ENCODE measurements at regions of chr10 and their contacts with region 1.

Region 1: GRCh38 chr10:35707642-35708420 is 65.7 kb upstream of the FZD8 start:
- DNase-seq: no peak
- ATAC-seq: no peak
- H3K4me3 ChIP-seq: no peak overlapping the region
- H3K4me3 Mint-ChIP-seq: no peak overlapping the region
- H3K27ac ChIP-seq: no peak overlapping the region
- H3K27ac Mint-ChIP-seq: no peak overlapping the region
- H3K4me1 ChIP-seq: no peaks in the 10 kb centered on the region
- H3K4me1 Mint-ChIP-seq: no peaks in the 10 kb centered on the region
- H3K27me3 ChIP-seq: peaks cover 0 to 2% of the 10 kb centered on the region in 2 experiments
- H3K27me3 Mint-ChIP-seq: peaks cover 14% of the 10 kb centered on the region
- CTCF ChIP-seq: no peak

Region 2: GRCh38 chr10:35675846-35676245 is 32.0 kb before region 1 on chr10:
- CTCF ChIA-PET with region 1: no interaction called
- POLR2A ChIA-PET with region 1: no interaction called
- intact Hi-C with region 1: loop called in 1 of 2 experiments (anchors 1 kb)
- DNase-seq: no peak
- ATAC-seq: no peak
- H3K4me3 ChIP-seq: no peak overlapping the region
- H3K4me3 Mint-ChIP-seq: no peak overlapping the region
- H3K27ac ChIP-seq: no peak overlapping the region
- H3K27ac Mint-ChIP-seq: no peak overlapping the region
- H3K4me1 ChIP-seq: no peaks in the 10 kb centered on the region
- H3K4me1 Mint-ChIP-seq: no peaks in the 10 kb centered on the region
- H3K27me3 ChIP-seq: no peaks in the 10 kb centered on the region
- H3K27me3 Mint-ChIP-seq: peaks cover 8% of the 10 kb centered on the region
- CTCF ChIP-seq: no peak